Mammary epithelial cell (primary cell): ENCODE measurements at regions of chr12 and their contacts with region 1.

Region 1: GRCh38 chr12:13233830-13234641 is 37.5 kb downstream of the EMP1 start:
- DNase-seq: peak; percentile 55
- H3K4me3 ChIP-seq: no peak overlapping the region
- H3K27ac ChIP-seq: no peak overlapping the region
- H3K4me1 ChIP-seq: no peaks in the 10 kb centered on the region
- H3K27me3 ChIP-seq: no peaks in the 10 kb centered on the region
- CTCF ChIP-seq: peak; percentile 93 to 98

Region 2: GRCh38 chr12:12916135-12916944 is 317.7 kb before region 1 on chr12:
- CTCF ChIA-PET with region 1: no interaction called
- dilution Hi-C with region 1: no loop called
- in situ Hi-C with region 1: loop called (anchors 10 to 25 kb)
- intact Hi-C with region 1: loop called (anchors 1 kb)
- DNase-seq: peak; percentile 54
- H3K4me3 ChIP-seq: no peak overlapping the region
- H3K27ac ChIP-seq: no peak overlapping the region
- H3K4me1 ChIP-seq: no peaks in the 10 kb centered on the region
- H3K27me3 ChIP-seq: no peaks in the 10 kb centered on the region
- CTCF ChIP-seq: peak; percentile 97 to 99

Region 3: GRCh38 chr12:12983420-12984035 is 250.5 kb before region 1 on chr12:
- CTCF ChIA-PET with region 1: no interaction called
- dilution Hi-C with region 1: no loop called
- in situ Hi-C with region 1: no loop called
- intact Hi-C with region 1: loop called (anchors 1 kb)
- DNase-seq: peak; percentile 37
- H3K4me3 ChIP-seq: no peak overlapping the region
- H3K27ac ChIP-seq: no peak overlapping the region
- H3K4me1 ChIP-seq: no peaks in the 10 kb centered on the region
- H3K27me3 ChIP-seq: no peaks in the 10 kb centered on the region
- CTCF ChIP-seq: peak; percentile 55 to 75

Region 4: DNA sequence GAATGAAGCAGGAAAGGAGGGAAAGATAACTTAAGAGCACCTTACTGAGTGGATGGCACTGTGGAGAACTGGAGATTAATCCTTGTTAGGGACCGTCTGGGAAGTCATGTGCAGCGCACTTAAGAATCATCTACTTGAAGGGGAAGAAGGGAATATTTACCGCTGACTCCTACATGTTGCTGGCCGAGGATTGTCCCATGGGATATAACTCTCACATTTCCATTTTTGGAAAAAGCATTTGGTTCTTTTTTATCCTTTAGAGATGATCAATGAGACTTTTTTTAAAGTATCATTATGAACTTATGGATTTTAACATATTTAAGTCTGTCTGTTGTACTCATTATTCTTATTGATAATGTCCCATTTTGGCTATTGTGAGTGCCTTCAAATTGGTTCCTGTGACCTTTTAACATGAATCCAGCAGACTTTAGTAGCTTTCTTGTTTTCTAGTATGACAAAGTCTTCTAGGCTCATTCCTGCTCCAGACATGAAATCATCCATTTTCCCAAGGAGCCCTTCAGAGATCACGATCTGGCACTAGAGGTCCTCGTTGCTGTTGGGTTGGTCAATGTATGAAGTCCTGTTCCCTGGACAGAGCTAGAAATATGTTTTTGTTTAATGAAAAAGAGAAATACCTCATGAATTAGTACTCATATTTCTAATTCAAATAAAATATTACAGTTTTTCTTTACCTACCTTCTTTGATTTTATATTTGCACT is 210.1 kb before region 1 on chr12:
- CTCF ChIA-PET with region 1: no interaction called
- dilution Hi-C with region 1: no loop called
- in situ Hi-C with region 1: no loop called
- intact Hi-C with region 1: loop called (anchors 1 kb)
- DNase-seq: no peak
- H3K4me3 ChIP-seq: no peak overlapping the region
- H3K27ac ChIP-seq: no peak overlapping the region
- H3K4me1 ChIP-seq: no peaks in the 10 kb centered on the region
- H3K27me3 ChIP-seq: no peaks in the 10 kb centered on the region
- CTCF ChIP-seq: no peak

Region 5: GRCh38 chr12:13094347-13094746 is 139.7 kb before region 1 on chr12:
- CTCF ChIA-PET with region 1: no interaction called
- dilution Hi-C with region 1: no loop called
- in situ Hi-C with region 1: no loop called
- intact Hi-C with region 1: loop called (anchors 1 kb)
- DNase-seq: peak; percentile 54
- H3K4me3 ChIP-seq: no peak overlapping the region
- H3K27ac ChIP-seq: peak overlapping the region; percentile 54
- H3K4me1 ChIP-seq: peaks cover 41% of the 10 kb centered on the region
- H3K27me3 ChIP-seq: no peaks in the 10 kb centered on the region
- CTCF ChIP-seq: no peak

Region 6: GRCh38 chr12:13135371-13136178 is 98.5 kb before region 1 on chr12:
- CTCF ChIA-PET with region 1: no interaction called
- dilution Hi-C with region 1: no loop called
- in situ Hi-C with region 1: no loop called
- intact Hi-C with region 1: loop called (anchors 1 kb)
- DNase-seq: peak; percentile 96
- H3K4me3 ChIP-seq: peak overlapping the region in 2 of 3 experiments; percentile 8 to 24
- H3K27ac ChIP-seq: peak overlapping the region; percentile 80
- H3K4me1 ChIP-seq: peaks cover 45% of the 10 kb centered on the region
- H3K27me3 ChIP-seq: no peaks in the 10 kb centered on the region
- CTCF ChIP-seq: peak in 1 of 2 donors; percentile 42

Region 7: DNA sequence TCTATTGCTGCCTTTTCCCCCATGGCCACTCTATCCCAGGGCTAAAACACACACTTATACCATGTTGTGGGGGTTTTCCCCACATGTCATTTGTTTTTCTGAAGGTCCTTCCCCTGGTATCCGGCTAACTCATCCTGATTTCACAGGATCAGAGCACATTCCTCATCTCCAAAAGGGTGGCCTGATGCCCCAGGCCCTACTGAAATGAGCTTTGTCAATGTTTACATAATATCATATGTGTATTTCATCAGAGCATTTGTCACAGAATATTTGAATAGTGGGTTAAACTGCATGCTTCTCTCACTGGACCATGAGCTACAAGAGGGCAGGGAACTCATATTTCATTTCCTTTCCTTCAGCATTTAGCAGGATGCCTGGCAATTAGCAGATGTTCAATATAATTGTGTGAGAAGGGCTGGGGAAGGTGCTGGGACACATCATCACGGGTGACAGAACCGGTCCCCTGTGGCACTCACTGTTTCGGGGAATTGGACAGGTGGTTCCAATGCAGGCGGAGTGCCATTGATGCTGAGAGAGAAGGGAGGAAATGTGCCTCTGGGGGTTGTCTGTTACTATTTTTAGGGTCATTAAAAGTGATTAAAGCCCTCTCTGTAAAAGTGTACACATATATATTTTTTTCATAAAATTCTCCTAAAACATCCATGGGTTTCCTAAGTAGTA is 10.7 kb before region 1 on chr12:
- CTCF ChIA-PET with region 1: no interaction called
- dilution Hi-C with region 1: no loop called
- in situ Hi-C with region 1: no loop called
- intact Hi-C with region 1: no loop called
- DNase-seq: peak; percentile 83
- H3K4me3 ChIP-seq: no peak overlapping the region
- H3K27ac ChIP-seq: peak overlapping the region; percentile 75
- H3K4me1 ChIP-seq: peaks cover 29% of the 10 kb centered on the region
- H3K27me3 ChIP-seq: no peaks in the 10 kb centered on the region
- CTCF ChIP-seq: no peak